Activated T-helper 1 cell treated with anti-CD3 and anti-CD28 coated beads, Interleukin-12 subunit alpha, Interleukin-12 subunit beta, Interleukin-2, Interleukin-4 antibody, amounts not matched to agents 30 ng/mL and 10 ng/mL and 1 ng/mL, durations not matched to agents 14 hours and 24 hours and 36 hours (primary cell): ENCODE measurements at regions of chr3 and their contacts with region 1.

Region 1: DNA sequence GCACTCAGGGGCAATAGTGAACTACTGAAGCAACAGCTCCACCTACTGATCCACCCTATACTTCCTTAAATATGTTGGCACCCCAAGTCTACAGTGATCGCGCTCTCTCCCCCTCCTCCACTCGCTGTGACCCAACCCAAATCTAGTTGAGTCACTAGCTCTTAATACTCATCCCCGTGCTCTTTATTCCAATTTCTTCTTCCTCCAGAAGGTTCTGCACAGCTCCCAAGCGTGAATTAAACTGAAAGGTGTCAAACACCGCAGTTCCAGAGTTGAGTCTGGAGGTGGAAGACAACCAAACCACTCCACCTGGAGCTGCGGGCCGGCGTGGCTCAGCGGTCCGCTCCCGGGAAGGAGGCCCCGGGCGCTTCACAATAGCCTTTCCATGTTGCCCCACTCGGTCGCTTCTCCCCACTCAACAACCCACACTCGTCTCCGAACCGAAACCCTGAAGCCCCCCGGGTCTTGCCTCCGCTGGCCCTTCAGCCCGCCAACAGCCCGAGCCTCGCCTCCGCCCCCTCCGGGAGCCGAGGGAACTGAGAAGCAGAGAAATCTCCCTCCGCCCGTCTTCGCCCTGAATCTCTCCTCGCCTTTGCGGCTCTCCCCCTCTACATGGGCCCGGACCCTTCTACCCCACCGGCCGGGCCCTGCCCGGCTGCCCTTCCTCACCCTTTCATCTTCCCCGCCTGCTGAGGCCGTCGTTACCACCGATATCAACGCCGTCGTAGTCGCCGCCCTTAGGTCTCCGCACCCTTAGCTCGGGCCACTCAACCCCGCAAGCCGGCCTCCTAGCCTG is 578 bp downstream of the NAA50 start:
- DNase-seq: peak; percentile 70
- H3K4me3 Mint-ChIP-seq: peak overlapping the region; percentile 99
- H3K27ac Mint-ChIP-seq: peak overlapping the region; percentile 100
- H3K4me1 Mint-ChIP-seq: peaks cover 83% of the 10 kb centered on the region
- H3K27me3 Mint-ChIP-seq: peaks cover 4% of the 10 kb centered on the region

Region 2: DNA sequence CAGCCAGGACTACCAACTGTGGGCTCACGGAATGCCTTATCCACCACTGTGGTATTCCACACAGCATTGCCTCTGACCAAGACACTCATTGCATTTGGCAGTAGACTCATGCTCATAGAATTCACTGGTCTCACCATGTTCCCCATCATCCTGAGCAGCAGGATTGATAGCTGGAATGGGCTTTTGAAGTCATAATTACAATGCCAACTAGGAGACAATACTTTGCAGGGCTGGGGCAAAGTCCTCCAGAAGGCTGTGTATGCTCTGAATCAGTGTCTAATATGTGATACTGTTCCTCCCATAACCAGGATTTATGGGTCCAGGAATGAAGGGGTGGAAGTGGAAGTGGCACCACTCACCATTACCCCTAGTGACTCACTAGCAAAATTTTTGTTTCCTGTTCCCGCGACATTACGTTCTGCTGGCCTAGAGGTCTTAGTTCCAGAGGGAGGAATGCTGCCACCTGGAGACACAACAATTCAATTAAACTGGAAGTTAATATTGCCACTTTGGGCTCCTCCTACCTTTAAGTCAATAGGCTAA is 1046.0 kb before region 1 on chr3:
- intact Hi-C with region 1: no loop called
- DNase-seq: no peak
- H3K4me3 Mint-ChIP-seq: no peak overlapping the region
- H3K27ac Mint-ChIP-seq: no peak overlapping the region
- H3K4me1 Mint-ChIP-seq: no peaks in the 10 kb centered on the region
- H3K27me3 Mint-ChIP-seq: peaks cover 20% of the 10 kb centered on the region

Region 3: GRCh38 chr3:113051302-113051711 is 694.2 kb before region 1 on chr3:
- intact Hi-C with region 1: loop called (anchors 1 kb)
- DNase-seq: peak; percentile 81
- H3K4me3 Mint-ChIP-seq: no peak overlapping the region
- H3K27ac Mint-ChIP-seq: no peak overlapping the region
- H3K4me1 Mint-ChIP-seq: no peaks in the 10 kb centered on the region
- H3K27me3 Mint-ChIP-seq: peaks cover 4% of the 10 kb centered on the region

Region 4: DNA sequence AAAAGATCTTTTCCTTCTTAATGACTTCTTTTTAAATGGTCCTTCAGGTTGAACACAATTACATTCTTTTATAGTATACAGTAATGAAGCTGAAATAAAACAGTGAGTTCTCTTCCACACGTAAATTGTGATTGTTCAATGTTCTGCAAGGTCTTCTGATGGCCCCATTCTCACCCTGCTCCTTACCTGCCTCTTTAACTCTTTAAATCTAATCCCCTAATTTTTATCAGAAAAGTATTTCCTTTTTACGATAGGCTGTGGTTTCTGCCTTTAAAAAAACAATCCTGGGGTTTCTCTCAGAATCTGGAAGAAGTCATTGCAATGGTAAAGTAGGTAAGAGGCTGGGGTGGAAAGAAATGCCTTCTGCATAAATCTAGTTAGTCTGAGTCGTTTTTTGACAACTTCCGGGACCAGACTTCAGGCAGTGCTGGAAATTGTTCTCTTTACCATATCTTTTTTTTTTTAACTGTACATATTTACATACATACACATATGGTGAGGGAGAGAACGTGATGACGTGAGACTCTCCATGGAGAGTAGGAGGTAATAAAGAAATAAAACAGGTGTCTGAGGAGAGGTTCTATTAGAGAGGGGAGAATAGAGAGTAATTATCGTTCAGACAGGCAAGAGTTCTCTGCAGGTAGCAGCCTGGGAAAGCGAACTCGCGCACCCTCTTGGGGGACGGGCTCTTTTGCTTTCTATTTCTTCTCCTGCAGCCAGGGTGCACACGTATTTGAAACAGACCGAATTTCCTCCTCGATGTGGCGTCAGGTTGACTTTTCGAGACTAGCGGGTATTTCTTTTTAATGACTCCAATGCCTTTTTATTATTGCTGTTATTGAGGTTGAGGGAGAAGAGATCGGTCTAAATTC is 213.4 kb before region 1 on chr3 and contains the start of gene SIDT1:
- intact Hi-C with region 1: loop called (anchors 2 kb)
- DNase-seq: peak; percentile 64
- H3K4me3 Mint-ChIP-seq: peak within 1 kb of the TSS; percentile 100
- H3K27ac Mint-ChIP-seq: peak within 1 kb of the TSS; percentile 99
- H3K4me1 Mint-ChIP-seq: peaks cover 55% of the 10 kb centered on the region
- H3K27me3 Mint-ChIP-seq: peaks cover 10% of the 10 kb centered on the region
- total RNA-seq, gene SIDT1: 11.3 and 12.2 TPM in 2 replicates

Region 5: GRCh38 chr3:113552851-113553250 is 192.6 kb before region 1 on chr3:
- intact Hi-C with region 1: no loop called
- DNase-seq: no peak
- H3K4me3 Mint-ChIP-seq: no peak overlapping the region
- H3K27ac Mint-ChIP-seq: no peak overlapping the region
- H3K4me1 Mint-ChIP-seq: no peaks in the 10 kb centered on the region
- H3K27me3 Mint-ChIP-seq: no peaks in the 10 kb centered on the region

Region 6: DNA sequence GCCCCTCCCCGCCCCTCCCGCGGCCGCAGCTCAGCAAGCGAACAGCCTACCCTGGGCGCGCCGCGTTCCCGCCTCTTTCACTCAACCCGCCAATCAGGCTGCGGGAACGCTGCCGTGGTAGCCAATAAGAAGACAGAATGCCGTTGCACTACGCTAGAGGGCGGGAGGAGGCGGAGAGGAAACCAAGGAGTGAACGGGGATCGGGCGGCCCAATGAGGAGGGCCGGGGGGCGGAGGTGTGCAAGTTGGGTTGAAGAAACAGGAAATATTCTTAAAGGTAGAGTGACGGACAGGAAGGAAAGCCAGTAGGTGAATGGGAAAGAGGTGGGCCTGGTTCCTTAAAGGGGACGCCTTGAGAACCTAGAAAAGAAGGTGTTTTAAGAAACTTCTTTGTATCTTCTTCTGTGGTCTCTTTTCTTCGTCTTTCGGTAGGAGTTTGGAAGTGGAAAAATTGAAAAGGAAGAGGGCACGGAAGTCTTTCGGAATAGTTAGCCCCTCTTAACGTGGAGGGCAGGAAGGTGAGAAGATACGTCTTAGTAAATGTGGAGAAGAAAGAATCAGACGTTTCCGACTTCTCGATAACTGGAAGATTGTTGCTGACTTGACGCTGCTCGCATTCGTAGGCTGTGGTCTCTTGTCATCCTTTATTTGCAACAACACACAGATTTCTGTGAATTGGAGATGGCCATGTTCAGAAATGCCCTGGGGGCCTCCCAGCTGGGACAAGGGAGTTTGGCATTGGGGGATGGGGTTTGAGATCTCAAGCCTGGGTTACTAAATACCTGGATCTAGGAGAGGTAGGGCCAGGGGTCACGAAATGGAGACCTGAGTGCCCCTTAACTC is 48.6 kb before region 1 on chr3:
- intact Hi-C with region 1: loop called (anchors 1 kb)
- DNase-seq: peak; percentile 99
- H3K4me3 Mint-ChIP-seq: no peak overlapping the region
- H3K27ac Mint-ChIP-seq: no peak overlapping the region
- H3K4me1 Mint-ChIP-seq: peaks cover 20% of the 10 kb centered on the region
- H3K27me3 Mint-ChIP-seq: no peaks in the 10 kb centered on the region

Region 7: DNA sequence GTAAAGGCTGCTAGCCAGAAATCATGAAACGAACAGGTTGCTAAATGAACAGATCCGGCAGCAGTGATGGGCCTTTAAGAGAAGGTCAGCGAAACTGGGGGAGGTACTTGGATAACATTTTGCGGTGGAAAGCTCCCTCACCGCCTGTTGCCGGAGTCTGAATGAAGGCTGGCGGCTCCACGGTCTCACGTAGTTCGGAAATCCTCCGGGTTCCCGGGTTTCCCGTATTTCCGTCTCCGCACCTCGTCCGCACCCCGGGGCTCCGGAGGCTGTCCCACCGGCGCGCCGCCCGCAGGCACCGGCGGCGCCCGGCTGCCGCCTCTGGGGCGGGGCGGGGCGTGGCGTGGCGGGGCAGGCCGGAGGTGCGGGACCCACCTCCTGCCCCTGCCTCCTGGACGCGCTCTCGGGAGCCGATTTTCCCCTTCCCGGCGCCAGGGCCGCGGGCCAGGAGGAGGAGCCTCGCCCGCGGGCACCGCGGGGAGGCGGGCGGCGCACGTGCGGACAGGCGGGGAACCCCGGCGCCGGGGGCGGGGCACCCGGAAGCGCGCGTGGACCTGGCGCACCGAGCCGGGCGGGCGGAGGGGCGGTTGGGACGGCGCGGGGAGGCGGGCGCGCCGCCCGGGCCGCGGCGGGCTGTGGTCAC is 202.0 kb after region 1 on chr3 and contains the start of gene ZDHHC23:
- intact Hi-C with region 1: loop called (anchors 2 kb)
- DNase-seq: peak; percentile 66
- H3K4me3 Mint-ChIP-seq: peak within 1 kb of the TSS; percentile 85
- H3K27ac Mint-ChIP-seq: peak within 1 kb of the TSS; percentile 79
- H3K4me1 Mint-ChIP-seq: no peaks in the 10 kb centered on the region
- H3K27me3 Mint-ChIP-seq: peaks cover 41% of the 10 kb centered on the region
- total RNA-seq, gene ZDHHC23: 0.88 and 1.8 TPM in 2 replicates

Region 8: DNA sequence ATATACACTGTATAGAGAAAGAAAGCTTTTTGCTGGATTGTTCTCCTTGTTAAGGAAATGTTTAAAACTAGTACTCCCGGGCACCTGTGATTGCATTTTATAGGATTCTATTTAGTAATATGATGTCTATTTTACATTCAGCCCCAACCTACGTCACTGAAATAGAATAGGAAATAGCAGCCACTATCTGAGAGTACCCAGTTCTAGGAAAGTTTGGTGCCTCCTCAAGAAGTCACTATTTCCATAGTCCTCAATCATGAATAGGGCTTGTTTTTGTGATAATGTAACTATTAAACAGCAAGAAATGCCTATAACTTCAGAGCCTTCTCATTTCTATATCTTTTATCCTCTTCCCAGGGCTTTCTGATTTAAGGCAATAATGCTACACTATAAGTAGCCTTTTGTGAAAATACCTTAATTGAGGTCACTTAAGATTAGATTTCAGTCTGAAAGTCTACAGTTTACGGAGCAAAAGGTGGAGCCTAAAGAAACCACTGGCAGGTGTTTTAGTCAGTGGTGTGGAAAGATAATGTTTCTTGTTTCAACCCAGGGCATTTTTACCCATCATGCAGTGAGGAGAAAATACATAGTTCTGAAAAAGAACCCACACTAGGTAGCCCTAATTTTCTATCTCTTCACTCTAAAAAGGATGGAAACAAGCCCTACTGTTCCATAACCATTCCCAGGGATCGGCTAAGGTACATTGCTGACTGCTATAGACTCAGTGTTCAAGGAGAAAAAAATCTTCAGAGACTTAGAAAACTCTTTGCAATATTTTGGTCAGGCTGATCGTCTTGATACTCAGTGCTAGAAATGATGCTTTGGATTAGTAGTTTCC is 587.1 kb after region 1 on chr3:
- intact Hi-C with region 1: loop called (anchors 5 kb)
- DNase-seq: no peak
- H3K4me3 Mint-ChIP-seq: peak overlapping the region; percentile 20
- H3K27ac Mint-ChIP-seq: peak overlapping the region; percentile 86
- H3K4me1 Mint-ChIP-seq: peaks cover 51% of the 10 kb centered on the region
- H3K27me3 Mint-ChIP-seq: peaks cover 3% of the 10 kb centered on the region

Region 9: DNA sequence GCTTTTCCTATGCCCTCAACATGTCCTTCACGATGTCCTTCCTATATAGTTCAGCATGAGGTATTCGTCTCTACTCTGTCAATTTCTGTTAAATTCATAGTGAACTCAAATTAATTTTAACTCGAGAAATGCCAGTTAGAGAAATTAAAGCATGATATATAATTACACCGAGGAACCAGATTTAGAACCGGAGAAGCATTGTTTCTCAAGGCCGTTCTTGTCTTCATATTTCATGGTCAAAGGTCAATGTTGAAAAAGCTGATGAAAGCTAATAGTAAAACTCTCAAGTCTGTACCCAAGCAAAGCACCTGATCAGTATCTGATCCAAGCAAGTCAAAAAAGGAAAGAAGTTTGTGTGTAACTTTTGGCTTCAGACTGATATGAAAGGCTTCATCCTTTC is 1237.8 kb after region 1 on chr3:
- intact Hi-C with region 1: no loop called
- DNase-seq: no peak
- H3K4me3 Mint-ChIP-seq: no peak overlapping the region
- H3K27ac Mint-ChIP-seq: no peak overlapping the region
- H3K4me1 Mint-ChIP-seq: no peaks in the 10 kb centered on the region
- H3K27me3 Mint-ChIP-seq: no peaks in the 10 kb centered on the region